Activated naive CD4-positive, alpha-beta T cell treated with anti-CD3 and anti-CD28 coated beads for 36 hours (primary cell): ENCODE measurements at regions of chr3 and their contacts with region 1.

Region 1: DNA sequence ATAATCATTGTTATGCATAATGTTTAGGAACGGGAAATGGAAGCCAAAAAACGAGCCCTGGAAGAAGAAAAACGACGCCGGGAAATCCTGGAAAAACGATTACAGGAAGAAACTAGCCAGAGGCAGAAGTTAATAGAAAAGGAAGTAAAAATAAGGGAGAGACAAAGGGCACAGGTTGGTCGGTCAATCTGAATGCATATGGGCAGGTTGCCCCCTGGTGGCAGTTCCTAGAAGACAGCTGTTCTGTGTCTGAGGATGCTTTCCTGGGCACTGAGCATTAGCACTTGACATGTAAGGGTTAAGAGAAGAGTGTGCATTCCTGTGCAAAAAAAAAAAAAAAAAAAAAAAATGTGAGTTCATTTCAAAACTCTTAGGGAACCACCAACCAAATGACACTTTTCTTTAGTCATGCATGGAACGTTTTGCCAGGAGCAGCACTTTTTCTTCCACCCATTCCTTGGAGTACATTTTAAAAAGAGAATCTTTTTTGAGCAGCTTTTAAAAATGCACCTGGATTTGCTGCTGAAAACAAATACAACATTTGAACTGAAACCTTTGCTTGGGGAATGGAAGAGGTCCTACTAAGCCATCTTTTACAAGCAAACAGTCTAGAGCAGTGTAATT is 11.1 kb upstream of the ABHD10 start:
- DNase-seq: peak; percentile 93
- H3K4me3 Mint-ChIP-seq: no peak overlapping the region
- H3K27ac Mint-ChIP-seq: no peak overlapping the region
- H3K4me1 Mint-ChIP-seq: peaks cover 25% of the 10 kb centered on the region
- H3K27me3 Mint-ChIP-seq: no peaks in the 10 kb centered on the region

Region 2: DNA sequence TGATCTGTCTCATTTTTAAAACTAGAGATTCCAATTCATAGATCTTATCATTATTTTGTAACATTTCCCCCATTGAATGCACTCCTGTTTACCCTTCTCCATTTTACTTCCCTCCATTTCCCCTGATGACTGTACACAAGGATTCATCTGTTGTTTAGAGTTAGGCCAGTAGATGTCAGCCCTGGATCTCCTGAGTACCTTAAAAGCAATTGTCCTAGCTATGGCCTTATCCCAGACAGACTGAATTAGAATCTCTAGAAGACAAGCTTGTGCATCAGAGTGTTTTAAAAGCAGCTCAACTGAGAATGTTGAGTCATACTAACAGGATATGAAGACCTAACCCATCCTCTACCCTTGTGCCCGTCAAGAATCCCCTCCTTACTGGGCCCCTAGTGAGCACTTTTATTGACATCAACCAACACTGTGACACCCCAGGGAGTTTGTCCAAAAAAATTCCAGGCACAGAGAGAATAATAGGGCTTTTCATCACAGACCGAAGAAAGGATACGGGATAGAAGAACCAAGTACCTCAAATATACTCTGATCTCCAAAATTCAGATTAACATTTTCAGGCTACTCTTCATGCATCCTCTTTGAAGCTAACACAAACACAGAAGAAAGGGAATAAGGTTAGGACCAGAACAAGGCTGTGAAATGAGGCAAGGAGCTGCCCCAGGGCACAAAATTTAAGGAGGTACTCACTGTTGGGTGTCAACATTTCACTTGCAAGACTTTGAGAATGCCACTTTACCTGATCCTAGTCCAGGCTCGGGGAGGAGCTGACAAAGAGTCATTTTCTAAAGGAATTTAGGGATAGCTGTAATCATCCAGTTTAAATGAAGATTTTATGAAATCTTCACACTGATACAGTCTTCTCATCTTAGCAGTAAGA is 389.7 kb before region 1 on chr3:
- CTCF ChIA-PET with region 1: interaction called, 6 read pairs
- intact Hi-C with region 1: loop called (anchors 2 kb)
- DNase-seq: peak; percentile 38
- H3K4me3 Mint-ChIP-seq: peak overlapping the region; percentile 18
- H3K27ac Mint-ChIP-seq: peak overlapping the region; percentile 90
- H3K4me1 Mint-ChIP-seq: peaks cover 75% of the 10 kb centered on the region
- H3K27me3 Mint-ChIP-seq: no peaks in the 10 kb centered on the region

Region 3: GRCh38 chr3:111761309-111761831 is 206.4 kb before region 1 on chr3:
- CTCF ChIA-PET with region 1: interaction called, 4 read pairs
- intact Hi-C with region 1: loop called (anchors 1 kb)
- DNase-seq: peak; percentile 54
- H3K4me3 Mint-ChIP-seq: no peak overlapping the region
- H3K27ac Mint-ChIP-seq: peak overlapping the region; percentile 68
- H3K4me1 Mint-ChIP-seq: peaks cover 18% of the 10 kb centered on the region
- H3K27me3 Mint-ChIP-seq: no peaks in the 10 kb centered on the region

Region 4: GRCh38 chr3:111895079-111895478 is 72.7 kb before region 1 on chr3:
- CTCF ChIA-PET with region 1: interaction called, 4 read pairs
- intact Hi-C with region 1: loop called (anchors 1 kb)
- DNase-seq: no peak
- H3K4me3 Mint-ChIP-seq: no peak overlapping the region
- H3K27ac Mint-ChIP-seq: no peak overlapping the region
- H3K4me1 Mint-ChIP-seq: no peaks in the 10 kb centered on the region
- H3K27me3 Mint-ChIP-seq: peaks cover 2% of the 10 kb centered on the region

Region 5: DNA sequence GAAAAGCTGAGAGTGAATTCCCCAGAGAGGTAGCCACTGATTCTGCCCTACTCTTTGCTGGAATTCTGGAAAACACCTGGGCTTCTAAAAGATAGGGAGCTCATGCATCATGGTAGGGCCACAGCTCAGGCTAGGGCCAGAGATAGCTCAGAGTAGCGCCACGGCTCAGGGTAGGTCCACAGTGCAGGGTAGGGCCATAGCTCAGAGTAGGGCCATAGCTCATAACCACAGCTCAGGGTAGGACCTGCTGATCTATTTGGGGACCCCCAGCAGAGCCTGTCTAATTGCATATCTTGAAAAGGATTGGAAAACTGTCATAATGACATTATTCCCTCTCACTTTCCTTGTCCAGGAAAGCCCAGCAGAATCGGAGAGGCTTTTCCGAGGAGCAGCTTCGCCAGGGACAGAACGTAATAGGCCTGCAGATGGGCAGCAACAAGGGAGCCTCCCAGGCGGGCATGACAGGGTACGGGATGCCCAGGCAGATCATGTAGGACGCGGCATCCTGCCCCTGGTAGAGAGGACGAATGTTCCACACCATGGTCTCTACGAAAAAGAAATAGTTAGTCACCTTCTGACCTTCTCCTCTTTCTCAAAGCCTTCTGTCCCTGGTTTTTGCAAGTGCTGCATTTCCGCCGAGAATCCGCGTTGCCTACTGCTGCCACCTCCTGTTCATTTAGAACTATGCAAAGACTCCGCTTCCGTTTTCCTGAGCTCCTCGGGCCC is 45.5 kb after region 1 on chr3:
- CTCF ChIA-PET with region 1: interaction called, 64 read pairs
- intact Hi-C with region 1: loop called (anchors 1 kb)
- DNase-seq: peak; percentile 81
- H3K4me3 Mint-ChIP-seq: no peak overlapping the region
- H3K27ac Mint-ChIP-seq: no peak overlapping the region
- H3K4me1 Mint-ChIP-seq: peaks cover 17% of the 10 kb centered on the region
- H3K27me3 Mint-ChIP-seq: no peaks in the 10 kb centered on the region